Adrenal gland (tissue), 19 donors: ENCODE measurements at regions of chr19 and their contacts with region 1.

Region 1: GRCh38 chr19:29844891-29845572 is 33.2 kb downstream of the CCNE1 start:
- DNase-seq: peak; percentile 96 to 98 (median 97)
- H3K4me3 ChIP-seq: peak overlapping the region in 3 of 4 donors; percentile 68 to 85 (median 81)
- H3K27ac ChIP-seq: peak overlapping the region; percentile 87 to 96 (median 88)
- H3K4me1 ChIP-seq: peaks cover 13 to 25% of the 10 kb centered on the region in 2 donors
- H3K27me3 ChIP-seq: no peaks in the 10 kb centered on the region
- CTCF ChIP-seq: no peak
- POLR2A ChIP-seq: peak in 1 of 2 donors; percentile 94

Region 2: GRCh38 chr19:29811125-29812079 is 33.6 kb before region 1 on chr19 and contains the start of gene CCNE1:
- intact Hi-C with region 1: loop called in 1 of 2 experiments (anchors 5 kb)
- DNase-seq: peak; percentile 90 to 97 (median 96)
- H3K4me3 ChIP-seq: peak within 1 kb of the TSS in 2 of 4 donors; percentile 28 to 90
- H3K27ac ChIP-seq: peak within 1 kb of the TSS in 3 of 5 donors; percentile 51 to 88 (median 57)
- H3K4me1 ChIP-seq: peaks cover 10 to 18% of the 10 kb centered on the region in 2 donors
- H3K27me3 ChIP-seq: no peaks in the 10 kb centered on the region
- CTCF ChIP-seq: peak in 1 of 6 experiments; percentile 5
- POLR2A ChIP-seq: peak; percentile 32 to 34
- total RNA-seq, gene CCNE1: 3.0 to 67.7 (median 7.0) TPM

Region 3: GRCh38 chr19:30085394-30085793 is 240.4 kb after region 1 on chr19:
- intact Hi-C with region 1: no loop called
- DNase-seq: peak; percentile 70 to 85 (median 78)
- H3K4me3 ChIP-seq: no peak overlapping the region
- H3K27ac ChIP-seq: peak overlapping the region in 3 of 5 donors; percentile 49 to 78 (median 51)
- H3K4me1 ChIP-seq: peaks cover 0 to 19% of the 10 kb centered on the region in 2 donors
- H3K27me3 ChIP-seq: no peaks in the 10 kb centered on the region
- CTCF ChIP-seq: peak in 1 of 6 experiments; percentile 15
- POLR2A ChIP-seq: no peak